ENCODE measurements at regions of chr11 and their contacts with region 1.

Region 1: GRCh38 chr11:108319541-108320145 is 96.8 kb downstream of the ATM start:
- DNase-seq: no peak
- ATAC-seq: no peak
- H3K4me3 ChIP-seq: no peak overlapping the region
- H3K27ac ChIP-seq: no peak overlapping the region
- H3K4me1 ChIP-seq: no peaks in the 10 kb centered on the region
- H3K27me3 ChIP-seq: no peaks in the 10 kb centered on the region
- CTCF ChIP-seq: no peak
- POLR2A ChIP-seq: no peak

Region 2: GRCh38 chr11:108253176-108253575 is 66.5 kb before region 1 on chr11:
- intact Hi-C with region 1: loop called (anchors 10 kb)
- DNase-seq: no peak
- ATAC-seq: no peak
- H3K4me3 ChIP-seq: no peak overlapping the region
- H3K27ac ChIP-seq: no peak overlapping the region
- H3K4me1 ChIP-seq: no peaks in the 10 kb centered on the region
- H3K27me3 ChIP-seq: no peaks in the 10 kb centered on the region
- CTCF ChIP-seq: no peak
- POLR2A ChIP-seq: no peak

Measured in body of pancreas (tissue), 4 donors.